SK-N-SH (cell line): ENCODE measurements at regions of chrX and their contacts with region 1.

Region 1: DNA sequence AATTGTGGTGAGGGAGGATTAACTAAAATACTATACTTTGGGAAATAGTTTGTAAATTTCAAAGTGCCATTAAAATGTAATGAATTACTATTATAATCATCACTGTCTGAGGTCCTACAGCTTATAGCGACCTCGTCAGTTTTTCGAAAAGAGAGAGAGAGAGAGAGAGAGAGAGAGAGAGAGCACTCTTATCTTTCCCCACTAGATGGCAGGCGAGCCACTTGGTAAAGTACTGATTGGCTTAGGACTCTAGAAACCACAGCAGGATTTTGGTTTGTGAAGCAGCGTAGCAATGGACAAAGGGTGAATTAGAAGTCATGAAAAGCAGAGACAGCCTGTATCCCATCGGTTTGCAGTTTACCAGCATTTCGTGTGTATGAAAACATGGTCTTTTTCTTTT is 52.5 kb downstream of the LINC00632 start:
- DNase-seq: peak; percentile 50
- H3K4me3 ChIP-seq: no peak overlapping the region
- H3K27ac ChIP-seq: no peak overlapping the region
- H3K4me1 ChIP-seq: no peaks in the 10 kb centered on the region
- H3K27me3 ChIP-seq: no peaks in the 10 kb centered on the region; the same call in 1 of the 2 replicates
- CTCF ChIP-seq: peak; percentile 83
- EP300 ChIP-seq: no peak
- RAD21 ChIP-seq: peak; percentile 55

Region 2: GRCh38 chrX:140744085-140744484 is 18.0 kb before region 1 on chrX:
- CTCF ChIA-PET with region 1: interaction called, 12 read pairs
- POLR2A ChIA-PET with region 1: no interaction called
- DNase-seq: no peak
- H3K4me3 ChIP-seq: no peak overlapping the region
- H3K27ac ChIP-seq: no peak overlapping the region
- H3K4me1 ChIP-seq: no peaks in the 10 kb centered on the region
- H3K27me3 ChIP-seq: no peaks in the 10 kb centered on the region
- CTCF ChIP-seq: no peak
- EP300 ChIP-seq: no peak
- RAD21 ChIP-seq: no peak

Region 3: DNA sequence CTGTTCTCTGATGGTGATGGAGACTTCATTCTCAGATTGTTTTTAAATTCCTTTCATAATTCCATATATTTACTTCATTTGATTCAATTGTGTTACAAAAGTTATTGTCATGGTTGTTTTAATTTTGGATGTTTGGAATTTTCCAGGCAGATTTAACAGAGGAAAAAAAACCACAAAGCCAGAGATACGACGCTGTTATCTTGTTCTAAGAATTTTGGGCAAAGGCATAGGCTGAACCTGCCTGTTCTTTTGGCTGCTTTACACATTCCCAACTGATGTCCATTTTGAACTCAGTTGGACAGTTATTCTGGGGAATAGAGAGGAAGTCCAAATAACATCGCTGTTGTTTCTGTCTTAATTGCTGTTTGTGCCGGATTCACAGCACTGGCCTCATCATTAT is 13.2 kb after region 1 on chrX:
- CTCF ChIA-PET with region 1: interaction called, 27 read pairs
- POLR2A ChIA-PET with region 1: no interaction called
- DNase-seq: no peak
- H3K4me3 ChIP-seq: no peak overlapping the region
- H3K27ac ChIP-seq: no peak overlapping the region
- H3K4me1 ChIP-seq: no peaks in the 10 kb centered on the region
- H3K27me3 ChIP-seq: no peaks in the 10 kb centered on the region; the same call in 1 of the 2 replicates
- CTCF ChIP-seq: no peak
- EP300 ChIP-seq: no peak
- RAD21 ChIP-seq: no peak

Region 4: DNA sequence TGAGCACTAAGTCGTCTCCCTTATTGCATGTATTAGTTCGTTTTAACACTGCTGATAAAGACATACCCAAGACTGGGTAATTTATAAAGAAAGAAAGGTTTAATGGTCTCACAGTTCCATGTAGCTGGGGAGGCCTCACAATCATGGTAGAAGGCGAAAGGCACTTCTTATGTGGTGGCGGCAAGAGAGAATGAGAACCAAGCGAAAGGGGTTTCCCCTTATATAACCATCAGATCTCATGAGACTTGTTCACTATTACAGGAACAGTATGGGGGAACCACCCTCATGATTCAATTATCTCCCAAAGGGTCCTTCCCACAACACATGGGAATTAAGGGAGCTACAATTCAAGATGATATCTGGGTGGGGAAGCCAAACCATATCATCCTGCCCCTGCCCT is 32.6 kb after region 1 on chrX:
- CTCF ChIA-PET with region 1: interaction called, 16 read pairs
- POLR2A ChIA-PET with region 1: no interaction called
- DNase-seq: no peak
- H3K4me3 ChIP-seq: no peak overlapping the region
- H3K27ac ChIP-seq: no peak overlapping the region
- H3K4me1 ChIP-seq: no peaks in the 10 kb centered on the region
- H3K27me3 ChIP-seq: no peaks in the 10 kb centered on the region
- CTCF ChIP-seq: no peak
- EP300 ChIP-seq: no peak
- RAD21 ChIP-seq: no peak

Region 5: GRCh38 chrX:140817942-140818341 is 55.9 kb after region 1 on chrX:
- CTCF ChIA-PET with region 1: interaction called, 18 read pairs
- POLR2A ChIA-PET with region 1: no interaction called
- DNase-seq: peak; percentile 19
- H3K4me3 ChIP-seq: no peak overlapping the region; a peak in 1 of 4 replicates
- H3K27ac ChIP-seq: no peak overlapping the region
- H3K4me1 ChIP-seq: no peaks in the 10 kb centered on the region; a peak in 1 of 4 replicates
- H3K27me3 ChIP-seq: peaks cover 13% of the 10 kb centered on the region; the same call in 1 of the 2 replicates
- CTCF ChIP-seq: peak; percentile 76
- EP300 ChIP-seq: no peak
- RAD21 ChIP-seq: peak; percentile 55

Region 6: DNA sequence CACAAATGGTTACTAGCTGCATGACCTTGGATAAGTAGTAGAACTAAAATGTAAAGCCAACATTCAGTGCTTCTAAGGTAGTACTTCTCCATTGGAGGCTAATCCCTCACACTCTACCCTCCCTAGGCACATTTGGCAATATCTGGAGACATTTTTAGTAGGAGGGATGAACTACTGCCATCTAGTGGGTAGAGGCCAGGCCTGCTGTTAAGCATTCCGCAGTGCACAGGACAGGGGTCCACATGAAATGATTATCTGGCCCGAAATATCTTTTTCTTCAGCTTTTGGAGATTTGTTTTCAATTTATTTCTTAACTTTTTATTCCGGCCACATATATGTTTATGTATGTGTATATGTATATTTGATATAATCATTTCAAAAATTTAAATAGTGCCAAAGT is 516.2 kb after region 1 on chrX:
- CTCF ChIA-PET with region 1: interaction called, 13 read pairs
- POLR2A ChIA-PET with region 1: no interaction called
- DNase-seq: peak; percentile 38
- H3K4me3 ChIP-seq: no peak overlapping the region
- H3K27ac ChIP-seq: no peak overlapping the region
- H3K4me1 ChIP-seq: no peaks in the 10 kb centered on the region
- H3K27me3 ChIP-seq: peaks cover 7% of the 10 kb centered on the region; the same call in 1 of the 2 replicates
- CTCF ChIP-seq: peak; percentile 84
- EP300 ChIP-seq: no peak
- RAD21 ChIP-seq: peak; percentile 71